ENCODE measurements at regions of chr11 and their contacts with region 1.

Region 1: GRCh38 chr11:62421996-62422395 is 3.2 kb downstream of the SCGB1A1 start:
- DNase-seq: no peak
- H3K4me3 ChIP-seq: no peak overlapping the region
- H3K27ac ChIP-seq: no peak overlapping the region
- H3K4me1 ChIP-seq: no peaks in the 10 kb centered on the region
- H3K27me3 ChIP-seq: no peaks in the 10 kb centered on the region
- CTCF ChIP-seq: no peak
- POLR2A ChIP-seq: no peak

Region 2: GRCh38 chr11:62542750-62543567 is 121.0 kb after region 1 on chr11:
- intact Hi-C with region 1: loop called (anchors 5 kb)
- DNase-seq: peak; percentile 68 to 85 (median 75)
- H3K4me3 ChIP-seq: peak overlapping the region in 1 of 4 donors; percentile 93
- H3K27ac ChIP-seq: peak overlapping the region in 4 of 5 donors; percentile 49 to 96 (median 76)
- H3K4me1 ChIP-seq: peaks cover 54 to 78% of the 10 kb centered on the region in 2 donors
- H3K27me3 ChIP-seq: no peaks in the 10 kb centered on the region
- CTCF ChIP-seq: peak; percentile 91 to 98 (median 97)
- POLR2A ChIP-seq: no peak

Region 3: DNA sequence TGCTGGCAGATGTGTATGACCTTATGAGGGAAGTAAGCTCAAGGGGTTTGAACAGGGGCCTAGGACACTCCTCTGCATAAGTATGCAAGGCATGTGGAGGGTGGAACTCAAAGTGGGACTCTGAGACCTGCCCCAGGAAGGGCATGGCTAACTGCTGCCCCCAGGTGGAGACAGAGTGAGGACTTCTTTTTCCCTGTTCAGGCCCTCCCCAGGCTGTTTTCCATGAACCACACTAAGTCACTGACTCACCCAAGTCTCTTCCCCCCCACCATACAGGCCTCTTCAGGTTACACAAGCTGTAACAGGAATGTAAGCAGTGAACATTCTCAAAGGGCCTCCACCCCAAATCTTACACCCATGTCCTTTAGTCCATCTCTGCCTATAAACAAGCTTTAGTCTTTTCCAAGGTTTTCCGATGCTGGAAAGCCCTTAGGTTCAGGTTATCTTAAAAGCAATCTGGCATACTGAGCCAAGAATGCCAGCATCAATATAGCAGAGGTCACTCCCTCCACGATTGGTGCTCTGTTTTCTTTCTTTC is 138.6 kb after region 1 on chr11:
- intact Hi-C with region 1: loop called in 1 of 2 experiments (anchors 5 kb)
- DNase-seq: peak; percentile 89 to 96 (median 94)
- H3K4me3 ChIP-seq: no peak overlapping the region
- H3K27ac ChIP-seq: peak overlapping the region in 4 of 5 donors; percentile 62 to 90 (median 76)
- H3K4me1 ChIP-seq: peaks cover 16 to 32% of the 10 kb centered on the region in 2 donors
- H3K27me3 ChIP-seq: no peaks in the 10 kb centered on the region
- CTCF ChIP-seq: peak; percentile 61 to 92 (median 88)
- POLR2A ChIP-seq: no peak

Measured in adrenal gland (tissue), 19 donors.